ENCODE measurements at regions of chr3 and their contacts with region 1.

Region 1: DNA sequence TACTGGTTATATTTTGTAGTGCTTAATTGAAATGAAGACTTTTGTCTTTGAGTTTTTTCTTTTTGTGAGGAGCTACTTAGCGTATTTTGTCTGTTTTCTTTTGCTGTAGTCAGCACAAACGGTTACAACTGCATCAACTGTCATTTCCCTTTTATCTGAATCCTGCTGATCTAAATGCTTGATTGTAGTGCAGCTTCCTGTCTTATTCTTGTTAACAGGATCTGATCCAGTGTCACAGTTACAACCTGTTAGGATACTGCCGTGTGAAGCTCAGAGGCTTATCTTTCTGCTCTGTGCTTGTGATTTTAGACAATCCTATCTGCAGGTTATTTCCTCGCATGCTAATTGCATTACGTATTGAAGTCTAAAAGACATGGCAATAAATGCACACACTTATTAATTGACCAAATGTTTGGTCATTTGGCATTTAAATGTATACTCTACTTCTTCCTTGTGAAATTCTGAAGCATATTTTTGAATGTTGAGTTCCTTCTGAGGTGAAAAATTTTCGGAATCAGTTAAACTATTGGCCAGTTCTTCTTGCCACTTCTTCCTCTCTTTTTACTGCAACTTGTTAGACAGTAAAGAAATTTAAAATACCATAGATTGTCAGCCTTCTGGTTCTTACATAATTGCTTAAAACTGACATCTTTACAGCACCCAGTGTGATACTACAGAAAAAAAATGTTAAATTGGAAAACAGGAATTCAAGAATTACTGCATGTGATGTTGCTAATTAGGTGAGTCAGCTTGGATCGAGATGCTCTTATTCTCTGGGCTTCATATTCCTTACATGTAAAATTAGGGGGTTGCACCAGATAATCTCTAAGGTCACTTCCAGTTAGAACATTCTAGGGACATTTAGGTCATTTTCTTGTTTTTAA is 168.2 kb downstream of the MBNL1 start:
- DNase-seq: no peak
- ATAC-seq: peak; percentile 50 to 62
- H3K4me3 ChIP-seq: no peak overlapping the region
- H3K27ac ChIP-seq: no peak overlapping the region
- H3K4me1 ChIP-seq: no peaks in the 10 kb centered on the region
- H3K27me3 ChIP-seq: no peaks in the 10 kb centered on the region

Region 2: DNA sequence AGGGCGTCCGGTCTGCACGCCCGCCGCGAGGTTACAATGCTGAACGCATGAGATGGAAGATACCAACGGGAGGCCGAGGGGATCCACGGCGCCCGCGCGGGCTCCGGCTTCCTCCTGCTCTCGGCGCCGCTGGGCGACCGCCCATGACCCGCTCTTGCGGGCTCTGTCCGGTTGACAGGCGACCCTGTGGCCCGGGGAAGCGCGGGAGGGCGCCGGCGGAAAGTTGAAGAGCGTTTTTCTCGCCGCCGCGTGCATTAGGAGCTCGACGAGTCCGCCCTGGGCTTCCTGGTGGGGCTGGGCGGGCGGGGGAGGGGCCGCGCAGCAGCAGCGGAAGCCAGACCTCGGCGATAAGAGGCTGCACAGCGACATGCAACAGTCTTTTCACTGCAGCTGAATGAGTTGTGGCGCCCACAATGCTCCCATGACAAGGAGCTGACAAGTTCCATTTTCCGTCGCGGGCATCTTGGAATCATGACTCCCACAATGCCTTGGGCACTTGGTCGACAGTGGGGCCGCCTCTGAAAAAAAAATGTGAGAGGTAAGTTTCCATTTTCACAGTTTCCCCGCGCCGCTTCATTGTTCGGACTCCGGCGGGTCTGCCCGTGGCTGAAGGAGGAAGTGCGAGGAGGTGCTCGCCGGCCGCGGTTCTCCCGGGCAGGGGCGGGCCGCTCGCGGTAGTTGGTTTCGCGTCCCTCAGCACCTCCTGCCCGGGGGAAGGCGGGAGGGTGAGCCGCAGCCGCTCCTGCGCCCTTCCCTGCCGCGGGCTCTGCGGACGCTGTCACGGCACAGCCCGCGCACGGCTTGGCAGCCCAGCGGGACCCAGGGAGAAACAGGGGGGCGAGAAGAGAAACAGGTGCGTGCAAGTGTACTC is 168.2 kb before region 1 on chr3 and contains the start of gene MBNL1:
- intact Hi-C with region 1: loop called in 3 of 4 experiments (anchors 10 kb)
- DNase-seq: peak; percentile 82 to 92 (median 91)
- ATAC-seq: peak; percentile 84 to 88
- H3K4me3 ChIP-seq: peak within 1 kb of the TSS; percentile 70
- H3K27ac ChIP-seq: peak within 1 kb of the TSS; percentile 88
- H3K4me1 ChIP-seq: peaks cover 7% of the 10 kb centered on the region
- H3K27me3 ChIP-seq: no peaks in the 10 kb centered on the region
- total RNA-seq, gene MBNL1: 142 to 160 (median 154) TPM

Region 3: GRCh38 chr3:152302521-152303021 is 134.4 kb before region 1 on chr3:
- intact Hi-C with region 1: loop called in 1 of 4 experiments (anchors 10 kb)
- DNase-seq: peak; percentile 68 to 83 (median 71)
- ATAC-seq: peak; percentile 75 to 76
- H3K4me3 ChIP-seq: peak overlapping the region; percentile 50
- H3K27ac ChIP-seq: peak overlapping the region; percentile 78
- H3K4me1 ChIP-seq: peaks cover 8% of the 10 kb centered on the region
- H3K27me3 ChIP-seq: no peaks in the 10 kb centered on the region

Region 4: DNA sequence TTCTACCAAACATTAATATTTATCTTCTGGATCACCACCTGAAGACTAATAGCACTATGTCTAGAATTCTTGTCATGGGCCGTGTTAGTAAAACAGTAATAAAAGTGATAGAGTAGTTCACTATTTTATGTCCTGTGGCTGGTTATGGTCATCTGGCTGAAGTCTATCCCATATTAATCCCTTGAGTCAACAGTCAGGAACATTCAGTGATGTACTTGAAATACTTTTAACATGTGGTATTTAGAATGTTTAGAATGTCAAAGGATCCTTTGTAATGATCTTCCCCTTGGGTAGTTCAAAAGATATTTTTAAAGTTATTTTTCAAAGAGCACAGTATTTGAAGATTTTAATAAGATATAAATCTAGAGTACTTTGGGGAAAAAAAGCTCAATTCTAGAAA is 51.2 kb before region 1 on chr3:
- intact Hi-C with region 1: no loop called
- DNase-seq: no peak
- ATAC-seq: no peak
- H3K4me3 ChIP-seq: peak overlapping the region; percentile 10
- H3K27ac ChIP-seq: no peak overlapping the region
- H3K4me1 ChIP-seq: peaks cover 4% of the 10 kb centered on the region
- H3K27me3 ChIP-seq: no peaks in the 10 kb centered on the region

Measured in right cardiac atrium (tissue), 5 donors.